ENCODE measurements at regions of chr12 and their contacts with region 1.

Region 1: GRCh38 chr12:121124402-121125098 is 8.1 kb upstream of the P2RX7 start:
- DNase-seq: peak; percentile 99
- ATAC-seq: peak; percentile 99
- H3K4me3 ChIP-seq: no peak overlapping the region
- H3K27ac ChIP-seq: peak overlapping the region; percentile 77
- H3K4me1 ChIP-seq: peaks cover 18% of the 10 kb centered on the region
- H3K27me3 ChIP-seq: no peaks in the 10 kb centered on the region
- CTCF ChIP-seq: no peak

Region 2: GRCh38 chr12:120936196-120936595 is 188.4 kb before region 1 on chr12:
- CTCF ChIA-PET with region 1: no interaction called
- POLR2A ChIA-PET with region 1: no interaction called
- intact Hi-C with region 1: no loop called
- DNase-seq: no peak
- ATAC-seq: no peak
- H3K4me3 ChIP-seq: no peak overlapping the region
- H3K27ac ChIP-seq: no peak overlapping the region
- H3K4me1 ChIP-seq: no peaks in the 10 kb centered on the region
- H3K27me3 ChIP-seq: no peaks in the 10 kb centered on the region
- CTCF ChIP-seq: no peak

Region 3: GRCh38 chr12:121175383-121176227 is 51.1 kb after region 1 on chr12:
- CTCF ChIA-PET with region 1: no interaction called
- POLR2A ChIA-PET with region 1: no interaction called
- intact Hi-C with region 1: no loop called
- DNase-seq: no peak
- ATAC-seq: no peak
- H3K4me3 ChIP-seq: no peak overlapping the region
- H3K27ac ChIP-seq: no peak overlapping the region
- H3K4me1 ChIP-seq: no peaks in the 10 kb centered on the region; the same call in 1 of the 2 replicates
- H3K27me3 ChIP-seq: no peaks in the 10 kb centered on the region
- CTCF ChIP-seq: no peak

Region 4: GRCh38 chr12:121214855-121215745 is 90.5 kb after region 1 on chr12:
- CTCF ChIA-PET with region 1: no interaction called
- POLR2A ChIA-PET with region 1: no interaction called
- intact Hi-C with region 1: loop called (anchors 2 kb)
- DNase-seq: peak; percentile 96
- ATAC-seq: peak; percentile 74
- H3K4me3 ChIP-seq: peak overlapping the region; percentile 14; the same call in 1 of the 2 replicates
- H3K27ac ChIP-seq: peak overlapping the region; percentile 41
- H3K4me1 ChIP-seq: peaks cover 36% of the 10 kb centered on the region
- H3K27me3 ChIP-seq: no peaks in the 10 kb centered on the region
- CTCF ChIP-seq: no peak

Measured in PC-3 (cell line).